Naive thymus-derived CD4-positive, alpha-beta T cell (primary cell): ENCODE measurements at regions of chr1 and their contacts with region 1.

Region 1: GRCh38 chr1:89274411-89274857 is 1.8 kb upstream of the GBP5 start:
- DNase-seq: peak in 2 of 9 donors; percentile 21 to 55
- ATAC-seq: peak; percentile 63
- H3K4me3 ChIP-seq: peak overlapping the region; percentile 40
- H3K4me3 Mint-ChIP-seq: peak overlapping the region; percentile 73 to 90 (median 80)
- H3K27ac ChIP-seq: peak overlapping the region; percentile 60
- H3K27ac Mint-ChIP-seq: peak overlapping the region; percentile 90 to 98 (median 95)
- H3K4me1 ChIP-seq: peaks cover 48 to 49% of the 10 kb centered on the region in 2 donors
- H3K4me1 Mint-ChIP-seq: peaks cover 44 to 92% (median 78%) of the 10 kb centered on the region in 7 donors
- H3K27me3 ChIP-seq: no peaks in the 10 kb centered on the region
- H3K27me3 Mint-ChIP-seq: no peaks in the 10 kb centered on the region

Region 2: DNA sequence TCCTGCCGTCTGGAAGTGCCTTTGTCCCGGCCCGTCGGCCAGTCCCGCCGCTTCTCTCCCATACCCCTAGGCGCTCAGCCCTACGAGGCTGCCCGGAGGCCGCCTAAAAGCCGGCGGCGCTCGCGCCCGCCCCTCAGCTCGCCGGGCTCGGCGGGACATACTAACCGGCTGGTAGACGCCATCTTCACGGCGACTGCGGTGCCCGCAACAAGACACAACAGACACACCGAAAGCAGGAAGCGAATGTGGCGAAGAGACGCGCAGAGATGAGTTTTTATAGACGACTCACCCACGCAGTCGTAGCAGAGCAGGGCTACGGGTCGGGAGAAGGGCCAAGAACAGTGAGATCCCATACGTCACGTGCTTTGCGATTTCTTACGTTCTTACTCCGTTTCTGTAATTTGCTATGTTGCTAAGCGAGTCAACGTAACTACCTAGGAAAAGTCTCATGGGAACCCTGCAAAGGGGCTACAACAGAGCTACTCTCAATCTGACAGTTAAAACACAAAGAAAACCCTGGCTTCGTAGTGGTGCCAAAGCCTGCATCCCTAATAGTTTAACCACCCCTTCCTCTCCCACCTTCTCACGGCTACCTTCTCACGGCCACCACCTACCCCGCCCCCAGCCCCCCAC is 383.0 kb before region 1 on chr1 and contains the start of gene GTF2B:
- CTCF ChIA-PET with region 1: no interaction called
- POLR2A ChIA-PET with region 1: no interaction called
- intact Hi-C with region 1: loop called in 1 of 2 experiments (anchors 5 kb)
- DNase-seq: peak; percentile 86 to 96 (median 94)
- ATAC-seq: peak; percentile 97
- H3K4me3 ChIP-seq: peak within 1 kb of the TSS; percentile 86
- H3K4me3 Mint-ChIP-seq: peak within 1 kb of the TSS; percentile 87 to 99 (median 95)
- H3K27ac ChIP-seq: peak within 1 kb of the TSS; percentile 91
- H3K27ac Mint-ChIP-seq: peak within 1 kb of the TSS; percentile 93 to 98 (median 97)
- H3K4me1 ChIP-seq: peaks cover 26 to 27% of the 10 kb centered on the region in 2 donors
- H3K4me1 Mint-ChIP-seq: peaks cover 23 to 59% (median 48%) of the 10 kb centered on the region in 7 donors
- H3K27me3 ChIP-seq: no peaks in the 10 kb centered on the region
- H3K27me3 Mint-ChIP-seq: peaks cover 0 to 2% (median 0%) of the 10 kb centered on the region in 5 donors
- total RNA-seq, gene GTF2B: 41.3 to 53.6 (median 47.3) TPM

Region 3: GRCh38 chr1:89022167-89022959 is 252.1 kb before region 1 on chr1 and contains the start of gene GBP3:
- CTCF ChIA-PET with region 1: no interaction called
- POLR2A ChIA-PET with region 1: interaction called, 6 read pairs
- intact Hi-C with region 1: loop called in 1 of 2 experiments (anchors 5 kb)
- DNase-seq: peak in 7 of 9 donors; percentile 22 to 52 (median 41)
- ATAC-seq: peak; percentile 84
- H3K4me3 ChIP-seq: peak within 1 kb of the TSS; percentile 75
- H3K4me3 Mint-ChIP-seq: peak within 1 kb of the TSS; percentile 83 to 99 (median 95)
- H3K27ac ChIP-seq: peak within 1 kb of the TSS; percentile 84
- H3K27ac Mint-ChIP-seq: peak within 1 kb of the TSS; percentile 85 to 99 (median 93)
- H3K4me1 ChIP-seq: peaks cover 16 to 21% of the 10 kb centered on the region in 2 donors
- H3K4me1 Mint-ChIP-seq: peaks cover 30 to 58% (median 48%) of the 10 kb centered on the region in 7 donors
- H3K27me3 ChIP-seq: no peaks in the 10 kb centered on the region
- H3K27me3 Mint-ChIP-seq: no peaks in the 10 kb centered on the region
- total RNA-seq, gene GBP3: 15.9 to 39.9 (median 31.9) TPM

Region 4: GRCh38 chr1:89198491-89199072 is 75.9 kb before region 1 on chr1 and contains the start of gene GBP4:
- CTCF ChIA-PET with region 1: interaction called, 11 read pairs
- POLR2A ChIA-PET with region 1: interaction called, 28 read pairs
- intact Hi-C with region 1: loop called (anchors 1 to 2 kb)
- DNase-seq: peak; percentile 25 to 49 (median 41)
- ATAC-seq: peak; percentile 73
- H3K4me3 ChIP-seq: peak within 1 kb of the TSS; percentile 92
- H3K4me3 Mint-ChIP-seq: peak within 1 kb of the TSS; percentile 91 to 99 (median 97)
- H3K27ac ChIP-seq: peak within 1 kb of the TSS; percentile 88
- H3K27ac Mint-ChIP-seq: peak within 1 kb of the TSS; percentile 91 to 99 (median 95)
- H3K4me1 ChIP-seq: peaks cover 42 to 47% of the 10 kb centered on the region in 2 donors
- H3K4me1 Mint-ChIP-seq: peaks cover 51 to 82% (median 71%) of the 10 kb centered on the region in 7 donors
- H3K27me3 ChIP-seq: no peaks in the 10 kb centered on the region
- H3K27me3 Mint-ChIP-seq: no peaks in the 10 kb centered on the region
- total RNA-seq, gene GBP4: 29.1 to 174 (median 37.4) TPM

Region 5: GRCh38 chr1:89310505-89310904 is 36.1 kb after region 1 on chr1:
- CTCF ChIA-PET with region 1: interaction called, 6 read pairs
- POLR2A ChIA-PET with region 1: interaction called, 9 read pairs
- intact Hi-C with region 1: loop called (anchors 1 to 2 kb)
- DNase-seq: peak in 5 of 9 donors; percentile 15 to 38 (median 24)
- ATAC-seq: peak; percentile 48
- H3K4me3 ChIP-seq: peak overlapping the region; percentile 17
- H3K4me3 Mint-ChIP-seq: peak overlapping the region in 9 of 10 donors; percentile 33 to 85 (median 69)
- H3K27ac ChIP-seq: peak overlapping the region; percentile 41
- H3K27ac Mint-ChIP-seq: peak overlapping the region; percentile 76 to 98 (median 89)
- H3K4me1 ChIP-seq: peaks cover 39 to 40% of the 10 kb centered on the region in 2 donors
- H3K4me1 Mint-ChIP-seq: peaks cover 29 to 64% (median 57%) of the 10 kb centered on the region in 7 donors
- H3K27me3 ChIP-seq: no peaks in the 10 kb centered on the region
- H3K27me3 Mint-ChIP-seq: no peaks in the 10 kb centered on the region

Region 6: GRCh38 chr1:89605692-89606091 is 331.3 kb after region 1 on chr1:
- CTCF ChIA-PET with region 1: no interaction called
- POLR2A ChIA-PET with region 1: no interaction called
- intact Hi-C with region 1: loop called (anchors 5 kb)
- DNase-seq: no peak
- ATAC-seq: no peak
- H3K4me3 ChIP-seq: peak overlapping the region; percentile 17
- H3K4me3 Mint-ChIP-seq: peak overlapping the region in 8 of 10 donors; percentile 52 to 96 (median 88)
- H3K27ac ChIP-seq: peak overlapping the region; percentile 92
- H3K27ac Mint-ChIP-seq: peak overlapping the region; percentile 97 to 100 (median 99)
- H3K4me1 ChIP-seq: peaks cover 82 to 85% of the 10 kb centered on the region in 2 donors
- H3K4me1 Mint-ChIP-seq: peaks cover 44 to 96% (median 93%) of the 10 kb centered on the region in 7 donors
- H3K27me3 ChIP-seq: no peaks in the 10 kb centered on the region
- H3K27me3 Mint-ChIP-seq: no peaks in the 10 kb centered on the region